Colonic mucosa (tissue), 4 donors: ENCODE measurements at regions of chrX and their contacts with region 1.

Region 1: DNA sequence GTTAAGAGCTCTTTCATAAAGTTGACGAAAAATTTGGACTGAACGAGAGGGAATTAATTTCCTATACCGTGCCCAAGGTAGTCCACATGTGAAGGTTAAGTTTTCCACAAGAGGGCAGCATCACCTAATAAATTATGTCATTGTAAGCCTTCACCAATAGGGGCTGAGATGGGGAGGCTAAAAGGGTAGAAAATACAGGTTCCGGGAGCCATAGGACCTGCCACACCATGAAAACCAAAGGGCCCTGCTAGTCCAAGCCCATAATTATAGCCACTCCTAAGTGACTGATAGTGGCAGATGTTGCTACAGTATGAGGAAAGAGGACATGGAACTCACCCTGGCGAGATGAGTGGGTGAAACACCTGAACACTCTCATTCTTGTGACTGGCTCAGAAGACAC is 122.2 kb downstream of the SHROOM4 start:
- DNase-seq: peak; percentile 21
- H3K4me3 ChIP-seq: no peak overlapping the region
- H3K27ac ChIP-seq: no peak overlapping the region
- H3K4me1 ChIP-seq: no peaks in the 10 kb centered on the region
- H3K27me3 ChIP-seq: no peaks in the 10 kb centered on the region
- CTCF ChIP-seq: peak; percentile 58

Region 2: GRCh38 chrX:50905334-50905733 is 213.5 kb after region 1 on chrX:
- intact Hi-C with region 1: loop called (anchors 5 kb)
- DNase-seq: peak; percentile 21
- H3K4me3 ChIP-seq: no peak overlapping the region
- H3K27ac ChIP-seq: no peak overlapping the region
- H3K4me1 ChIP-seq: no peaks in the 10 kb centered on the region
- H3K27me3 ChIP-seq: peaks cover 9% of the 10 kb centered on the region
- CTCF ChIP-seq: peak; percentile 44

Region 3: GRCh38 chrX:50920132-50920531 is 228.3 kb after region 1 on chrX:
- intact Hi-C with region 1: loop called (anchors 5 kb)
- DNase-seq: no peak
- H3K4me3 ChIP-seq: no peak overlapping the region
- H3K27ac ChIP-seq: no peak overlapping the region
- H3K4me1 ChIP-seq: no peaks in the 10 kb centered on the region
- H3K27me3 ChIP-seq: no peaks in the 10 kb centered on the region
- CTCF ChIP-seq: peak; percentile 30

Region 4: GRCh38 chrX:50988649-50989048 is 296.8 kb after region 1 on chrX:
- intact Hi-C with region 1: loop called (anchors 5 kb)
- DNase-seq: peak; percentile 22
- H3K4me3 ChIP-seq: no peak overlapping the region
- H3K27ac ChIP-seq: no peak overlapping the region
- H3K4me1 ChIP-seq: no peaks in the 10 kb centered on the region
- H3K27me3 ChIP-seq: no peaks in the 10 kb centered on the region
- CTCF ChIP-seq: peak; percentile 32